ENCODE measurements at regions of chr1 and their contacts with region 1.

Region 1: GRCh38 chr1:153494976-153495535 is 34.6 kb upstream of the S100A7 start:
- DNase-seq: peak; percentile 40 to 78 (median 58)
- ATAC-seq: peak; percentile 84
- H3K4me3 ChIP-seq: no peak overlapping the region
- H3K4me3 Mint-ChIP-seq: no peak overlapping the region
- H3K27ac ChIP-seq: no peak overlapping the region
- H3K27ac Mint-ChIP-seq: no peak overlapping the region
- H3K4me1 ChIP-seq: no peaks in the 10 kb centered on the region
- H3K4me1 Mint-ChIP-seq: peaks cover 0 to 8% (median 0%) of the 10 kb centered on the region in 7 donors
- H3K27me3 ChIP-seq: peaks cover 0 to 3% of the 10 kb centered on the region in 2 donors
- H3K27me3 Mint-ChIP-seq: peaks cover 9 to 45% (median 21%) of the 10 kb centered on the region in 5 donors

Region 2: DNA sequence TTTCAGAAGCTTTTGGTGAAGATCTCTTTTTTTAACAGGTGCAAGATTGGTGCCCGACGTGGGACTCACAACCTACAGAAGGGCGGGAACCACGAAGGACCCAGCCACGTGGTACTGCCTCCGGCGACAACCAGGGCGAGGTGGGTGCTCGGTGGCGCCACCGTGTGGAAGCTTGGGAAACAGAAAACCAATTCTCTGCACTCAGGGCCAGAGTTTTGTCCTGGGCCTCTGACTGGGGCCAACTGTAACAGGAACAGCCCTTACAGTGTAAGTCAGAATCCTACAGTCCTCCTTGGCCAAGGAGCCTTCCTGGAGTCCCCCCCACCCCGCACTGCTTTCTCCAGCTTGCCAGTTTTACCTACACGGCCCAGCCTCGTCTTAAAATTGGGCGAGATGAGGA is 90.3 kb before region 1 on chr1:
- CTCF ChIA-PET with region 1: interaction called, 4 read pairs
- POLR2A ChIA-PET with region 1: no interaction called
- intact Hi-C with region 1: loop called in 1 of 2 experiments (anchors 2 kb)
- DNase-seq: peak; percentile 12 to 61 (median 40)
- ATAC-seq: peak; percentile 88
- H3K4me3 ChIP-seq: no peak overlapping the region
- H3K4me3 Mint-ChIP-seq: no peak overlapping the region
- H3K27ac ChIP-seq: no peak overlapping the region
- H3K27ac Mint-ChIP-seq: no peak overlapping the region
- H3K4me1 ChIP-seq: no peaks in the 10 kb centered on the region
- H3K4me1 Mint-ChIP-seq: peaks cover 0 to 25% (median 13%) of the 10 kb centered on the region in 7 donors
- H3K27me3 ChIP-seq: no peaks in the 10 kb centered on the region
- H3K27me3 Mint-ChIP-seq: peaks cover 14 to 30% (median 20%) of the 10 kb centered on the region in 5 donors

Region 3: DNA sequence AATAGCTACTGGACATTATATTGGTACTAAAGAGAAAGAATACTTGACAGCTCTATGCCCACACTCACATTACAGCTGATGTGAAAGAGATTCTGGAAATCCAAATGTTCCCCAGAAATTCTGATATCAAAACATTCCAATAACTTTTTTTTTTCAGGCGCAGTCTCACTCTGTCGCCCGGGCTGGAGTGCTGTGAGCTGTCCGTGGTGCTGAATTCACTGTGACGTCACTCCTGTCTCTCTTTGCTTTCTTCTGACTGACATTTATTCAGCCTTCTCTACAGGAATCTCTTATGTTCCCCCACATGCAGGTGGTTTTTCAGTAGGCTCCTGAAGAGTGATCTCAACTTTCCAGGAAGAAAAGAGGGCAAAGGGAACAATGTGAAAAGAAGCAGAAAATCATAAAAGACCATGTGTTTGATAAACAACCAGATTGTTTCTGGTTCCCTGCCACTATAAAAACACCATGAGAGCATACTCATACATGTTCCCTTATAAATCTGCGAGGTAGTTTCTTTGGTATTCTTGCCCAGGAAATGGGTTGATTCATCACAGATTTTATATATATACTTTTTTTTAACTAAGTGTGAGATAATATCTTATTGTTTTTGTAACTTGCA is 72.5 kb before region 1 on chr1:
- CTCF ChIA-PET with region 1: no interaction called
- POLR2A ChIA-PET with region 1: no interaction called
- intact Hi-C with region 1: no loop called
- DNase-seq: peak; percentile 24 to 69 (median 58)
- ATAC-seq: peak; percentile 52
- H3K4me3 ChIP-seq: no peak overlapping the region
- H3K4me3 Mint-ChIP-seq: no peak overlapping the region
- H3K27ac ChIP-seq: no peak overlapping the region
- H3K27ac Mint-ChIP-seq: no peak overlapping the region
- H3K4me1 ChIP-seq: no peaks in the 10 kb centered on the region
- H3K4me1 Mint-ChIP-seq: peaks cover 0 to 1% (median 0%) of the 10 kb centered on the region in 7 donors
- H3K27me3 ChIP-seq: no peaks in the 10 kb centered on the region
- H3K27me3 Mint-ChIP-seq: peaks cover 5 to 69% (median 63%) of the 10 kb centered on the region in 5 donors

Measured in naive thymus-derived CD4-positive, alpha-beta T cell (primary cell).